Panc1 (cell line): ENCODE measurements at regions of chr7 and their contacts with region 1.

Region 1: DNA sequence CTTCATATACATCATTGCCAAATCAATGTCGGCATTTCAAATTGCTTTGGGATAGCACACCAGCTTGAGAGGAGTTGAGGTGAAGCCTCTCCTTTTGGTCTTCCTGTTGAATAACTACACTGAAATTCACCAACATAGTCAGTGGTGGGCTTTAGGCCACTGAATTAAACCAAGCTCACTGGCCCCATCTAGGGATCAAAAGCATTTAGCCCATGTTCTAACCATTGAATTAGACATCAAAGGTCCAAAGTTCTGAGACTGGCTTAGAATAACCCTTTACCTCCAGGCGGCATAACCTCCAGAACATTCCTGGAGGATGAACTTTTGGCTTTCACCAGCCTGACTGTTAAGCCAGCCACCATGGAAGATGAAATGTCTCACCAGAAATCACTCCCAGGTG is 54.6 kb downstream of the BPGM start:
- DNase-seq: no peak
- ATAC-seq: peak; percentile 56; the same call in 1 of the 2 replicates
- H3K4me3 ChIP-seq: no peak overlapping the region
- H3K27ac ChIP-seq: no peak overlapping the region
- H3K4me1 ChIP-seq: no peaks in the 10 kb centered on the region
- H3K27me3 ChIP-seq: peaks cover 2% of the 10 kb centered on the region
- CTCF ChIP-seq: peak; percentile 64

Region 2: GRCh38 chr7:134165252-134165651 is 536.0 kb before region 1 on chr7:
- CTCF ChIA-PET with region 1: interaction called, 10 read pairs
- POLR2A ChIA-PET with region 1: no interaction called
- in situ Hi-C with region 1: no loop called
- intact Hi-C with region 1: no loop called
- DNase-seq: no peak
- ATAC-seq: no peak
- H3K4me3 ChIP-seq: no peak overlapping the region
- H3K27ac ChIP-seq: no peak overlapping the region
- H3K4me1 ChIP-seq: no peaks in the 10 kb centered on the region
- H3K27me3 ChIP-seq: peaks cover 6% of the 10 kb centered on the region
- CTCF ChIP-seq: no peak

Region 3: DNA sequence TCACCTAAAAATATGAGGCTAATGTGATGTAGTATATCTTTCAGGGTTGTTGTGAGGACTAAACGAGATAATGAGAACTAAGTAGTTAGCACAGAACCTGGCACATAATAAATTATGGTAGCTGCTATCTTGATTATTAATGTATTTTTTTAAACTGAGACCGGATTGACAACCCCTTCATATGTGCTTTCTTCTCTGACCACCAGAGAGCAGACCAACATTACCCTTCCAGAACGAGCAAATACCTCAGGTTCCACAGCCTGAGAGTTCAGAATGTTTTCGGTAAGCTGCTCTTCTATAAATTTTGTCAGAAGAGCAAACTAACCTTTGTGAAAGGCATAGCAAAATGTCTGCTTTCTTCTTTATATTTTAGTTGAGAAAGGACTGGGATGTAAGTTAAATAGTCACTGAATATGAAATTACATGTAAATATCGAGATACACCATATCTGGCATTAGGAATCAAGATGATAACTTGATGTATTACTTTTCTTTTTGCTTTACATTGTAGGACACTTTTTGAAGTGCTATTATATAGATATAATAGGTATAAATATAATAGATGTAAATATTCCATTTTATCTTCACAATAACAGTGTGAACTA is 68.2 kb before region 1 on chr7:
- CTCF ChIA-PET with region 1: no interaction called
- POLR2A ChIA-PET with region 1: no interaction called
- in situ Hi-C with region 1: no loop called
- intact Hi-C with region 1: loop called (anchors 5 kb)
- DNase-seq: no peak
- ATAC-seq: peak; percentile 86
- H3K4me3 ChIP-seq: no peak overlapping the region
- H3K27ac ChIP-seq: no peak overlapping the region
- H3K4me1 ChIP-seq: no peaks in the 10 kb centered on the region
- H3K27me3 ChIP-seq: 0 out of 2 replicates have a peak, but pooled peaks cover 3% of the 10 kb centered on the region
- CTCF ChIP-seq: peak; percentile 71